H1 (cell line): ENCODE measurements at regions of chr6 and their contacts with region 1.

Region 1: GRCh38 chr6:44246663-44247337 is at the start of gene HSP90AB1:
- DNase-seq: peak; percentile 94 to 97
- H3K4me3 ChIP-seq: peak within 1 kb of the TSS; percentile 55 to 100 (median 98)
- H3K27ac ChIP-seq: peak within 1 kb of the TSS; percentile 95
- H3K4me1 ChIP-seq: peaks cover 7 to 18% (median 14%) of the 10 kb centered on the region in 4 experiments
- H3K27me3 ChIP-seq: no peaks in the 10 kb centered on the region
- CTCF ChIP-seq: no peak
- EP300 ChIP-seq: no peak
- POLR2A ChIP-seq: peak; percentile 99 to 100
- RAD21 ChIP-seq: no peak
- total RNA-seq, gene HSP90AB1: 2,224 and 2,297 TPM in 2 replicates

Region 2: DNA sequence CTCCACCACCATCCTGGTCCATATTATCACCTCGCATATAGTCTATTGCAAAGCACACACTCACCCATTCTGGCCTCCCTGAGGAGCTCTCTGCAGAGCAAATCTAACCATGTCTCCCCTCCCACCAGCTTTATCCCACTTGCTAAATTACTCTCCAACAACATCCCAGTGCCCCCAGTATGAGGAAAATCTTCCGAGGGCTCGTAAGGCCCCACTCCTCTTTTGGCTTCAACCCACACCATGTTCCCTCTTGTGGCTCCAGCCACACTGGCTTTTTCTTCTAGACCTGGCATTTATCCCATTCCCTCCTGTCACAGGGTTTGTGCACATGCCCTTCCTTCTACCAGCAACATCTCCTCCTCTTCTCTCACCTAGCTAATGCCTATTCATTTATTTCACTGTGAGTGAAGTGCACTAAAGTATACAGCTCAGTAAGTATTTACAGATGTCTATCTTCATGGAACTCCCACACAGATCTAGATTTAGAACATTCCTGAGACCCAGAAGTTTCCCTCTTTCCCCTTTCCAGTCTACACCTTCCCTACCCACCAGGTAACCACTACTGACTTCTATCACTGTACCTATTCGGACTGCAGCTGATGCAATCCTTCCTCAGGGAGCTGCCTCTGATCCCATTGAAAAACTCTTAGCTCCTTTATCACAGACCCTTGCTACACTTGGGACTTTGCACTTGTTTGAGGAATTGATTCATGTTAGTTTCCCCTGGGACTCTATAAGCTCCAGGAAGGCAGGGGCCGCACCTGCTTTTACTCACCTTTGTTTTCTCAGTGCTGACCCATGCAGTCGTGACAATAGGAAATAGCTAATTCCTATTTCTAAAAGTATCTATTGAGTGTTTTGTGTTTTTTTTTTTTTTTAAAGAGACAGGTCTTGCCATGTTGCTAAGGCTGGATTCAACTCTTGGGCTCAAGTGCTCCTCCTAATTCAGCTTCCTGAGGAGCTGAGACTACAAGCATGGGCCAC is 135.1 kb before region 1 on chr6:
- CTCF ChIA-PET with region 1: no interaction called
- POLR2A ChIA-PET with region 1: interaction called, 15 read pairs
- DNase-seq: no peak
- H3K4me3 ChIP-seq: no peak overlapping the region
- H3K27ac ChIP-seq: no peak overlapping the region
- H3K4me1 ChIP-seq: no peaks in the 10 kb centered on the region
- H3K27me3 ChIP-seq: no peaks in the 10 kb centered on the region
- CTCF ChIP-seq: no peak
- EP300 ChIP-seq: no peak
- POLR2A ChIP-seq: no peak
- RAD21 ChIP-seq: no peak

Region 3: DNA sequence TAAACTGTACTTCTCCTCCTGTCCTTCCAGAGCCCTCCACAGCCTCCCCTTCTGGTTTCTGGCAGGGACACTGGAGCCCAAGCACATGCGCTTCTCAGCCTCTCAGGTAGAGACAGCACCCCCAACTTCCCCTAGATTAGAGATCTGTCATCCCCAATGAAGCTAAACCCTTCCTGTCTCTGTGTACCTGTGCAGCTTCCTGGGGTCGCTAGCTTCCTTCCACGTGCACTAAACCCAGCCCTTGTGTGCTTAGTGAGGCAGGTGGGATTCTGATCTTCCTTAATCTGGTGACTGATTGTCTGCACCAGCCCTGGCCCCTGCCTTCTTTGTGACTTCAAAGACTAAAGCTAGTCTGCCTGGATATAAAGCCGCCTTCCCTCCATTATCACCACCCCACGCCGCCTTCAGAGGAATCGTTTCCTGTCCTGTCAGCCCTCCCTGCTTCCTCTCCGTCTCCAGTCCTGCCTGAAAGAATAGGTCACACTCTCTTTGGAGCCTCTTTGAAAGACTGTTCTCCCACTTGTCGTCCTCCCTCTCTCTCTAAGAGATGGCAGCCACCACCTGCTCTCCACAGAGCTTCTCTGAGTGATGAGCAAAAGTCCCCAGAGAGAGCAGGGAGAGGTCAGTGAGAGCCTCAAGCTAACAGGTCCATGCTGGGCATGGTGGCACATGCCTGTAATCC is 60.7 kb before region 1 on chr6:
- CTCF ChIA-PET with region 1: interaction called, 6 read pairs
- POLR2A ChIA-PET with region 1: interaction called, 25 read pairs
- DNase-seq: no peak
- H3K4me3 ChIP-seq: no peak overlapping the region
- H3K27ac ChIP-seq: no peak overlapping the region
- H3K4me1 ChIP-seq: peaks cover 2 to 10% (median 5%) of the 10 kb centered on the region in 4 experiments; a peak in 6 of 7 replicates
- H3K27me3 ChIP-seq: no peaks in the 10 kb centered on the region
- CTCF ChIP-seq: no peak
- EP300 ChIP-seq: no peak
- POLR2A ChIP-seq: no peak
- RAD21 ChIP-seq: no peak

Region 4: GRCh38 chr6:44211284-44211683 is 35.5 kb before region 1 on chr6:
- CTCF ChIA-PET with region 1: interaction called, 8 read pairs
- POLR2A ChIA-PET with region 1: interaction called, 23 read pairs
- DNase-seq: no peak
- H3K4me3 ChIP-seq: no peak overlapping the region
- H3K27ac ChIP-seq: no peak overlapping the region
- H3K4me1 ChIP-seq: peaks cover 4 to 15% (median 8%) of the 10 kb centered on the region in 4 experiments
- H3K27me3 ChIP-seq: no peaks in the 10 kb centered on the region
- CTCF ChIP-seq: no peak
- EP300 ChIP-seq: no peak
- POLR2A ChIP-seq: no peak
- RAD21 ChIP-seq: no peak

Region 5: GRCh38 chr6:44265007-44265721 is 18.4 kb after region 1 on chr6 and contains the start of gene NFKBIE:
- CTCF ChIA-PET with region 1: interaction called, 7 read pairs
- POLR2A ChIA-PET with region 1: interaction called, 581 read pairs
- DNase-seq: peak in 1 of 2 experiments; percentile 99
- H3K4me3 ChIP-seq: peak within 1 kb of the TSS; percentile 57 to 85 (median 76)
- H3K27ac ChIP-seq: no peak within 1 kb of the TSS
- H3K4me1 ChIP-seq: peaks cover 12 to 43% (median 21%) of the 10 kb centered on the region in 4 experiments
- H3K27me3 ChIP-seq: peaks cover 0 to 3% (median 0%) of the 10 kb centered on the region in 4 experiments; a peak in 2 of 7 replicates
- CTCF ChIP-seq: no peak; a peak in 1 of 4 replicates
- EP300 ChIP-seq: no peak
- POLR2A ChIP-seq: peak in 1 of 2 experiments; percentile 64; a peak in 2 of 3 replicates
- RAD21 ChIP-seq: peak in 1 of 2 experiments; percentile 34; a peak in 1 of 4 replicates
- total RNA-seq, gene NFKBIE: 10.8 and 13.5 TPM in 2 replicates

Region 6: GRCh38 chr6:44297063-44298038 is 50.6 kb after region 1 on chr6:
- CTCF ChIA-PET with region 1: interaction called, 5 read pairs
- POLR2A ChIA-PET with region 1: interaction called, 34 read pairs
- DNase-seq: peak in 1 of 2 experiments; percentile 87
- H3K4me3 ChIP-seq: peak overlapping the region; percentile 44 to 83 (median 68)
- H3K27ac ChIP-seq: no peak overlapping the region
- H3K4me1 ChIP-seq: peaks cover 0 to 5% (median 4%) of the 10 kb centered on the region in 4 experiments; a peak in 4 of 7 replicates
- H3K27me3 ChIP-seq: peaks cover 0 to 19% (median 14%) of the 10 kb centered on the region in 4 experiments; a peak in 6 of 7 replicates
- CTCF ChIP-seq: no peak
- EP300 ChIP-seq: no peak
- POLR2A ChIP-seq: peak in 1 of 2 experiments; percentile 38; a peak in 1 of 3 replicates
- RAD21 ChIP-seq: no peak

Region 7: GRCh38 chr6:44338228-44339122 is 91.7 kb after region 1 on chr6:
- CTCF ChIA-PET with region 1: interaction called, 6 read pairs
- POLR2A ChIA-PET with region 1: interaction called, 17 read pairs
- DNase-seq: peak; percentile 59 to 81
- H3K4me3 ChIP-seq: no peak overlapping the region
- H3K27ac ChIP-seq: no peak overlapping the region
- H3K4me1 ChIP-seq: peaks cover 0 to 5% (median under 1%) of the 10 kb centered on the region in 4 experiments; a peak in 3 of 7 replicates
- H3K27me3 ChIP-seq: peaks cover 3 to 6% (median 5%) of the 10 kb centered on the region in 4 experiments; a peak in 5 of 7 replicates
- CTCF ChIP-seq: peak; percentile 73 to 87 (median 85)
- EP300 ChIP-seq: no peak
- POLR2A ChIP-seq: no peak
- RAD21 ChIP-seq: peak; percentile 94 to 96